ENCODE measurements at regions of chr16 and their contacts with region 1.

Region 1: DNA sequence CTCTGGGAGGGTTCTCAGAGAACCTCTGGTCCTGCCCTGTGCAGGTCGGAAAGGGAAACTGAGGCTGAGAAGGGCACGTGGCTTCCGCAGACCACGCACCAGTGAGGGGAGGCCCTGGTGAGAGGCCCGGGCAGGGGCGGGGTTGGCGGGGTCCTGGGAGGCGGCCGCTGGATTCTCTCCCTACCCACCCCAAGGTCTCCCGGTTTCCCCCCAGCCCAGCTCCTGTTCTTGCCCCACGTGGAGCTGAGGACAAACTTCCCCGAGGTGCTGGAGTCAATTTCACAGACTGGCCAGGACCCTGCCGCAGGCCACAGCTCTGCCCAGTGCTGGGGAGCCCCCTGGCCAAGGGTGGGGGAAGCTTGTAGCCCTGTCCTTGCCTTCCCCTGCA is 11.5 kb downstream of the CCL17 start:
- DNase-seq: no peak
- H3K4me3 ChIP-seq: no peak overlapping the region
- H3K27me3 ChIP-seq: peaks cover 4% of the 10 kb centered on the region
- CTCF ChIP-seq: no peak

Region 2: DNA sequence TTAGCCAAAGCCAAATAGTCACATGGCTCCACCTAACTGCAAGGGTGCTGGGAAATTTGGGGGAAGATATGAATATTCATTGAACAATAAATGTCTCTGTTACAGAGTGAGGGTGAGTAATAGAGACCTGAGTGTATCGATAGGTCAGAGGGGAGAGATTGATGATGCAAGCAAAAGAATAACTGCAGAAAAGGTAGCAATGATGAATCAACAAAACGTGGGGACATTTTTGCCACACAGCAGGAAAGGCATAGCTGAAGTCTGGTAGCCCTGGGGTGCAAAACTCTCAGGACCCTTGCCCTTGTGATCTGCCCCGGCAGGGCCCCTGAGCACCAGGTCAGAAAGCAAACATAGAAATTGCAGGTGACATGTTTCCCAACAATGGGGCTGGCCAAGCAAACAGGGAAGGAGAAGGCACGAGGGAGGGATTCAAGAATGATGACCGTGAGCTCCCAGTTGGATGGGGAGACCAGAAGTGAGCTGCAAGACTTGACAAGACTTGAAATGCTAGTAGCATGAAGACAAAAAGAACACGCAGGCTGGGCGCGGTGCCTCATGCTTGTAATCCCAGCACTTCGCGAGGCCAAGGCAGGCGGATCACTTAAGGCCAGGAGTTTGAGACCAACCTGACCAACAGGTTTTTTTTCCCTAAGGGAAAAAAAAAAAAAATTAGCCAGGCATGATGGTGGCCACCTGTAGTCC is 496.9 kb before region 1 on chr16:
- CTCF ChIA-PET with region 1: no interaction called
- POLR2A ChIA-PET with region 1: no interaction called
- DNase-seq: no peak
- H3K4me3 ChIP-seq: no peak overlapping the region
- H3K27me3 ChIP-seq: peaks cover 2% of the 10 kb centered on the region
- CTCF ChIP-seq: no peak

Region 3: GRCh38 chr16:56950881-56951771 is 465.0 kb before region 1 on chr16:
- CTCF ChIA-PET with region 1: no interaction called
- POLR2A ChIA-PET with region 1: no interaction called
- DNase-seq: no peak
- H3K4me3 ChIP-seq: no peak overlapping the region
- H3K27me3 ChIP-seq: no peaks in the 10 kb centered on the region
- CTCF ChIP-seq: peak; percentile 86

Region 4: DNA sequence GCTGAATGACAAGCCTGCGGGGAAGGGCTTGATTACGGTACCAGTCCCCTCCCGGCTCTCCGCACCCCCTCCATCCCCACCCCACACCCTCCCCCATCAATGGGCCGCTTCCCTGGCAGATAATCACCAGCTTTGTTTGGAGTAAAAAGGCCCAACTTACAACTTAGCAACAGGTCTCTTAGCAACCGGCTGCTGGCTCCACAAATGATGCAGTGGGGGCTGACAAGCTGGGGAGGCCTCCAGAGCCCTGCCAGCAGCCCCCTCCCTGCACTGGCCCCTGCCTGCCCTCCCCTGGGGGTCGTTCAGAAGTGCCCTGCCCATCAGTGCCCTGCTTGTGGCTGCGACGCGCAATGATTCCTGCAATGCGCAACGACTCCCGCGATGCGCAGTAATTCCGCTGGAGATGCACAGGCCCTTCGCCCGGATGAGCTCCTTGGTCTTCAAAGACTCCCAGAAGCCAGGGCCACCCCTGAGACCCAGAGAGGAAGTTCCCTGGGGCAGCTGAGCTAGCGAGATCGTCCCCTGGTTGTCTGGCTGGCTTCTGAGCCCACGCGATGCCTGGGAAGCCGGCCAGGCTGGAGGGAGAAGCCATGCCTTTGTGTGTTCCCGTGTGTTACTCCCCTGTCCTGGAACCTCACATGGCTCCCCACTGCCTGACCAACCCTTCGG is 300.5 kb before region 1 on chr16:
- CTCF ChIA-PET with region 1: no interaction called
- POLR2A ChIA-PET with region 1: no interaction called
- DNase-seq: no peak
- H3K4me3 ChIP-seq: no peak overlapping the region
- H3K27me3 ChIP-seq: no peaks in the 10 kb centered on the region
- CTCF ChIP-seq: no peak

Region 5: DNA sequence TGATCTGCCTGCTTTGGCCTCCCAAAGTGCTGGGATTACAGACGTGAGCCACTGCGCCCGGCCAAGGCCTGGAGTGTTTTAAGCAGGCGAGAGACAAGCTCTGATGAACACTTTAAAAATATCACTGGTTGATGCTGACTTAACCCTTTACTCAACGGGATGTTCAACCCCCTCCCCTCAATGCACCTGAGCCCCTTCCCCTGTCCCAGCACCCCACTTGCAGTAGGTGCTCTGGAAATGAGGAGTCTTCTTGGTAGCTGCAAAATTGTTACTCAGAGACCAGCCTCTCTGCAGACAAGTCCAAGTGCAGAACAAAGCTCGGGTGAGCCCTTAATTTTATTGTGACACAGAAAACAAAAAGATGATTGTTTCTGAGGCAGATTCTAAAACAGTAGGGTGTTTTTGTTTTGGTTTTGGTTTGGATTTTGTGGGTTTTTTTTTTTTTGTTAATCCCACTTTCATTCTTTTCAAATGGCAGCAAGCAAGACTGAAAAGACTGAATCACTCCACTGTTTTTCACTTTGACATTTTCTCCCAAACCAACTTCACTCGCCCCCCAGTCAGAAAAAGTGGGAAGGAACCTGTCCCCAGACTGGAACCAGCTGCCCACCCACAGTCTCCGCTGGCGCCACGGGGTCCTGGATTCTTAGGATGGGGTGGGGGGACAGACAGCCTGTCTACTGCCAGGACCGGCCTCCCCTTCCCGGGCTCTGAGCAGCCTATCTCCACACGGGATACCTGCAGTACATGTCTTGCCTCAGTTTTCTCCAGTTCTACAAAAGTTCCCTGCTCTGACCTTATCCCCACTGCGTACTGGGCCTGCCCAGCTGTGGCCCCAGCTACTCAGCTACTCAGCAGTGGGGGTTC is 126.5 kb before region 1 on chr16:
- CTCF ChIA-PET with region 1: interaction called, 26 read pairs
- POLR2A ChIA-PET with region 1: no interaction called
- DNase-seq: no peak
- H3K4me3 ChIP-seq: no peak overlapping the region
- H3K27me3 ChIP-seq: peaks cover 3% of the 10 kb centered on the region
- CTCF ChIP-seq: no peak

Region 6: DNA sequence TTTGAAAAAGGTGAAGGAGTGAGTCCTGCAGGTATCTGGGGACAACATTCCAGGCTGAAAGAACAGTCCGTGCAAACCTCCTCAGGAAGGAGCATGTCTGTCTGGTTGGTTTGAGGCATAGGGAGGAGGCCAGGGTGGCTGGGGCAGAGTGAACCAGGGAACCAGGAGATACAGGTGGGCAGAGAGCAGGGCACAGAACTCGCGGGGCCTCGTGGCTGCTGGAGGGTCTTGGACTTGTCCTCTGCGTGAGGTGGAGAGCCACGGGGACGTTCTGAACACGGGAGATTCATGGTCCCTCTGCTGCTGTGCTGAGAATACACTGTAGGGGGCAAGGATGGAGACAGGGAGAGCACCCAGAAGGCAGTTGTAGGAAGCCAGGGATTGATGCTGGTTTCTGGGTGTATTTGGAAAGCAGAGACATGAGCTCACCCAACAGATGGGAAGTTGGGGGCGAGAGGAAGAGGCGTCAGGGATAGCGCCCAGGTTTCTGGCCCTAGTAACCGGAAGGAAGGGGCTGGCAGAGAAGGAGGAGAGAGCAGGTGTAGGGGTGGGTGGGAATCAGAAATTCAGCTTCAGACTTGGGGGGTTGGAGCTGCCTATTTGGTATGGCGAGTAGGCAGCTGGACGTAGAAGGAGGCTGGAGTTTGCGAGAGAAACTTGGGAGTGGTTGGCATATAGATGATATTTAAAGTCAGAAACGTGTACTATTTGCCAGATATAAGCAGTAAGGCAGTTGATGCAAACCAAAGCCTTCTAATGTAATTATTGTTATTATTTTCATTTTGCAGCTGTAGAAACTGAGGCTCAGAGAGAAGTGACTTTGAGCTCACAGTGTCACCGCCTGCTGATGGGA is 11.9 kb before region 1 on chr16 and contains the start of gene CCL17:
- CTCF ChIA-PET with region 1: interaction called, 21 read pairs
- POLR2A ChIA-PET with region 1: no interaction called
- DNase-seq: no peak
- H3K4me3 ChIP-seq: no peak within 1 kb of the TSS
- H3K27me3 ChIP-seq: peaks cover 10% of the 10 kb centered on the region
- CTCF ChIP-seq: no peak
- polyA plus RNA-seq, gene CCL17: not detected in 2 replicates

Region 7: DNA sequence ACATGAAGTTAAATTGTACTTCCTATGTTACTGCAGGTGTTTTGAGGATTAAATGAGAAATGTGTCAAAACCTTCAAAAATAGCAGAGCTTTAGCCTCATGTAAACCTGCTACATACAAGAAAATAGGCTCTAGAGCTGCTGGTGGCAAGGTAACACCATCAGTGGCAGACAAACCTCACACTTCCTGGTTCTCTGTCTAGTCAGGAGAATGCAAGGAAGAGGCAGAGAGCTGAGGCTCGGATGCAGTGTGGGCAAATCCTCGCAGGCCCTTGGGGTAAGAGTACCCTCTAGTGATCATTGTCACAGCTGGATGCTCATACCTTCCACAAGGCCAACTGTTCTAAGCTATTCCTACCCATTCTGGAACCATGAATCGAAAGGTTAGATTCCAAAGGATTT is 16.9 kb after region 1 on chr16:
- CTCF ChIA-PET with region 1: interaction called, 45 read pairs
- POLR2A ChIA-PET with region 1: no interaction called
- DNase-seq: no peak
- H3K4me3 ChIP-seq: no peak overlapping the region
- H3K27me3 ChIP-seq: no peaks in the 10 kb centered on the region
- CTCF ChIP-seq: no peak

Region 8: DNA sequence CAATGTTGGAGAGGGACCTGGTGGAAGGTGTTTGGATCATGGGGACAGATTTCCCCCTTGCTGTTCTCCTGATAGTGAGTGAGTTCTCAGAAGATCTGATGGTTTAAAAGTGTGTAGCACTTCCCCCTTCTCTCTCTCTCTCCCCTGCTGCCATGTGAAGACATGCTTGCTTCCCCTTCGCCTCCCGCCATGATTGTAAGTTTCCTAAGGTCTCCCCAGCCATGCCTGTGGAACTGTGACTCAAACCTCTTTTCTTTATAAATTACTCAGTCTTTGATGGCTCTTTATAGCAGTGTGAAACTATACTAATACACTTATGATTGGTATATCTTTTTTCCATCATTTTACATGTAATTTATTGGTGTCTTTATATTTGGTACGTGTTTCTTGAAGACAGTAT is 139.7 kb after region 1 on chr16:
- CTCF ChIA-PET with region 1: no interaction called
- POLR2A ChIA-PET with region 1: no interaction called
- DNase-seq: no peak
- H3K4me3 ChIP-seq: no peak overlapping the region
- H3K27me3 ChIP-seq: peaks cover 12% of the 10 kb centered on the region
- CTCF ChIP-seq: no peak